ENCODE measurements at regions of chr1 and their contacts with region 1.

Region 1: DNA sequence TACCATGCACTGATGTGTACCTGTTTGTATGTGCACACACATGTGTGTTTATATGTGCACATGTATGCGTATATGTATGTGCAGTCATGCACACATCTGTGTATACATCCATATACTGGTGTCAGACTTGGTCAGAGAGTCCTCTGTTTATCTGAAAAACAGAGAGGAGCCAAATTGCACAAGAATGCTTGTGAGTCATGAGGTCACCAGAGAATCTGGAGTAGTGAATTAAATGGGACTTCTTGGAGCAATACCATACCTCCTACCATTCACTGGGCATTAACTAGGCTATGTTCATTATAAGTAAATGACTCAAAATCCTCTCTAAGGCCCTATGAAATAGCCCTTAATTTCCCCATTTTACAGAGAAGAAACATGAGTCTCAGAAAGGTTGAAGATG is 272.1 kb upstream of the C1orf87 start:
- DNase-seq: no peak
- ATAC-seq: no peak
- H3K4me3 Mint-ChIP-seq: no peak overlapping the region
- H3K27ac Mint-ChIP-seq: no peak overlapping the region
- H3K4me1 Mint-ChIP-seq: no peaks in the 10 kb centered on the region
- H3K27me3 Mint-ChIP-seq: no peaks in the 10 kb centered on the region

Region 2: GRCh38 chr1:59666106-59666505 is 679.5 kb before region 1 on chr1:
- CTCF ChIA-PET with region 1: no interaction called
- POLR2A ChIA-PET with region 1: no interaction called
- intact Hi-C with region 1: no loop called
- DNase-seq: no peak
- ATAC-seq: no peak
- H3K4me3 Mint-ChIP-seq: no peak overlapping the region
- H3K27ac Mint-ChIP-seq: no peak overlapping the region
- H3K4me1 Mint-ChIP-seq: no peaks in the 10 kb centered on the region
- H3K27me3 Mint-ChIP-seq: no peaks in the 10 kb centered on the region

Region 3: GRCh38 chr1:60402816-60403215 is 57.2 kb after region 1 on chr1:
- CTCF ChIA-PET with region 1: no interaction called
- POLR2A ChIA-PET with region 1: no interaction called
- intact Hi-C with region 1: loop called in 1 of 2 experiments (anchors 10 kb)
- DNase-seq: no peak
- ATAC-seq: no peak
- H3K4me3 Mint-ChIP-seq: no peak overlapping the region
- H3K27ac Mint-ChIP-seq: no peak overlapping the region
- H3K4me1 Mint-ChIP-seq: no peaks in the 10 kb centered on the region
- H3K27me3 Mint-ChIP-seq: no peaks in the 10 kb centered on the region